ENCODE measurements at regions of chr1 and their contacts with region 1.

Region 1: DNA sequence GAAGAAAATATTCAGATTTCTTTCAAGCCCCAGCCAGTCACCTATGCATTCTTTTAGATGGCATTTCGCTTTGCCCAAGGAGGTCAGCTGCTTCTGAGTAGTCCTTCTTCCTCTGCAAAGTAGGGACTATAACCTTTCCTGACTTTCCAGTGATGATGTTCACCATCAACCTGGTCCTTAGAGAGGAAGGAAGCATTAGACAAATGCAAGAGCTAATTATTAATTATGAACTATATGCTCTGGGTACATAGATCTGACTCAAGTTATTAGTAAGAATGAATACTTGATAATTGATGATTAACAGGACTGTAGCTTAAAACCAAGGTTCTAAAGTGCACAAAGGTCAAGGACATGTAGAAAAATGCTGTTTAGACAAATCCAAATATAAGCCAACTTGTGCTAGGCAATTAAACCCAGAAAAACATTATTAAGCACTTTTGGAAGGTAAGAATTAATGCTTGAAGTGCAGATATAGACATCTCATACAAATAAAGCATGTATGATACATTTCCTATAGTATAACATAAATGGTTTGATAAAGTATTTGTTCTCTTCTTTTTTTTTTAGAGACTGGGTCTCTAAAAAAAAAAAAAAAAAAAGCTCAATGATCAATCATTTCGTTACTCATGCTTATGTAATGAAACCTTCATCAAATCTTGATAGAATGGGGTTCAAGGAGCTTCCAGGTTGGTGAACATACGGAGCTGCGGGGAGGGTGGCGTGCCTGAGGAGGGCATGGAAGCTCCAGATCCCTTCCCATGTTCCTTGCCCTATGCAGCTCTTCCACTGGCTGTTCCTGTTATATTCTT is 11.2 kb upstream of the AGMAT start:
- DNase-seq: no peak
- H3K4me3 ChIP-seq: no peak overlapping the region
- H3K27ac ChIP-seq: no peak overlapping the region
- H3K27me3 ChIP-seq: peaks cover 2% of the 10 kb centered on the region
- CTCF ChIP-seq: no peak

Region 2: GRCh38 chr1:15741183-15741850 is 145.3 kb after region 1 on chr1:
- CTCF ChIA-PET with region 1: interaction called, 23 read pairs
- POLR2A ChIA-PET with region 1: no interaction called
- DNase-seq: no peak
- H3K4me3 ChIP-seq: no peak overlapping the region
- H3K27ac ChIP-seq: no peak overlapping the region
- H3K27me3 ChIP-seq: no peaks in the 10 kb centered on the region
- CTCF ChIP-seq: peak; percentile 79